ENCODE measurements at regions of chrX and their contacts with region 1.

Region 1: GRCh38 chrX:120250522-120251271 is at the start of gene ZBTB33:
- DNase-seq: peak; percentile 71 to 90 (median 82)
- ATAC-seq: peak; percentile 98
- H3K4me3 Mint-ChIP-seq: peak within 1 kb of the TSS; percentile 88 to 97 (median 94)
- H3K27ac Mint-ChIP-seq: peak within 1 kb of the TSS; percentile 94 to 99 (median 97)
- H3K4me1 Mint-ChIP-seq: peaks cover 7 to 39% (median 22%) of the 10 kb centered on the region in 4 donors
- H3K27me3 Mint-ChIP-seq: no peaks in the 10 kb centered on the region
- polyA plus RNA-seq, gene ZBTB33: 9.6 to 14.3 (median 13.6) TPM

Region 2: DNA sequence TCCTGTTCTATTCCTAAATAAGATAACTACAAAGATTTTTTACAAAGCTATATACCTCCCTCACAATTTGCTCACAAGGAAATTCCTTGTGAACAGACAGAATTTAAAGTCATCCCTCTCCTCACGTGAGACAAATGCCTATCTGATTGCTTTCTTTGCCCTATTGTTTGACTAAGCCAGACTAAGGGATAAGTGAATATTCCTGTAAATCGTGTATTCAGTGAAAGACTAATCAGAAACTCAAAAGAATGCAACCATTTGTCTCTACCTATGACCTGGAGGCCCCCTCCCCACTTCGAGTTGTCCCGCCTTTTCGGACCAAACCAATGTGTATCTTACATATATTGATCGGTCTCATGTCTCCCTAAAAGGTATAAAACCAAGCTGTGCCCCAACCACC is 15.4 kb before region 1 on chrX:
- POLR2A ChIA-PET with region 1: no interaction called
- DNase-seq: no peak
- ATAC-seq: no peak
- H3K4me3 Mint-ChIP-seq: no peak overlapping the region
- H3K27ac Mint-ChIP-seq: no peak overlapping the region
- H3K4me1 Mint-ChIP-seq: no peaks in the 10 kb centered on the region
- H3K27me3 Mint-ChIP-seq: no peaks in the 10 kb centered on the region

Region 3: DNA sequence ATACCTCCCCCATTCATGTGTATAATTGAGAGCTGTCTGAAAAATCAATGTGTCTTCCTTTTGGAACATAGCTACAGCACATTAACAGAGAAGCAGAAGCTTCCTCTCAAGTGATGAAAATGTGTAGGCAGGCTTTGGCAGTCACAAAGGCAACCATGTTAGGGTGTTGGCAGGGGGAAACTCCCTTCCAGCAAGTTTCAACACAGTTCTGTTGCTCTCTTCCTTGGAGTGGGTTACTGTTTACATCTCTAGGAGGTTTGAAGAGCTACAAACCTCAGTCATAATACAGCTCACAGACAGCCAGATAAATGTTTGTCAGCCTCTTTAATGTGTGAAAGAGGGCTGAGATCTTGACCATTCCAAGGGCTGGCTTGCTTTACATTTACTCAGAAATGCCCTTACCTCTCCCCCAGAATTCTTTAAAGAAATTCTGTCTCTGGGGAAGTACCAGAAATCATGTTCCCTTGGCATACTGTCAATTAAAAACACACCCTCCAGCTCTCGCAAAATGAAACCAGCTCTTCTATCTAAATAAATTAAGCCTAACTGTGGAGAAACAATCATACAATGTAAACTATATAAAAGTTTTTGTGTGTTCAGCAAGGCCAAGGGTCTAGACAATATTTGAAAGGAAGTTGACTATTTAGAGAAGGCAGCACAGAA is 18.8 kb after region 1 on chrX:
- POLR2A ChIA-PET with region 1: interaction called, 17 read pairs
- DNase-seq: peak in 6 of 10 donors; percentile 2 to 53 (median 16)
- ATAC-seq: peak; percentile 97 to 98
- H3K4me3 Mint-ChIP-seq: peak overlapping the region in 1 of 10 donors; percentile 36
- H3K27ac Mint-ChIP-seq: peak overlapping the region; percentile 26 to 86 (median 76)
- H3K4me1 Mint-ChIP-seq: peaks cover 6 to 12% (median 12%) of the 10 kb centered on the region in 4 donors
- H3K27me3 Mint-ChIP-seq: no peaks in the 10 kb centered on the region

Region 4: GRCh38 chrX:120308959-120309872 is 58.5 kb after region 1 on chrX:
- POLR2A ChIA-PET with region 1: interaction called, 29 read pairs
- DNase-seq: peak; percentile 40 to 86 (median 60)
- ATAC-seq: peak; percentile 91 to 94
- H3K4me3 Mint-ChIP-seq: peak overlapping the region; percentile 80 to 97 (median 90)
- H3K27ac Mint-ChIP-seq: peak overlapping the region; percentile 42 to 96 (median 83)
- H3K4me1 Mint-ChIP-seq: peaks cover 10 to 19% (median 14%) of the 10 kb centered on the region in 4 donors
- H3K27me3 Mint-ChIP-seq: peaks cover 12 to 53% (median 24%) of the 10 kb centered on the region in 5 donors

Measured in naive thymus-derived CD8-positive, alpha-beta T cell (primary cell).